Activated T-helper 2 cell treated with anti-CD3 and anti-CD28 coated beads, Interferon-gamma antibody, Interleukin-2, Interleukin-4, amounts not matched to agents 10 μg/mL and 5 μg/mL and 100 μg/mL, durations not matched to agents 14 hours and 24 hours and 36 hours (primary cell): ENCODE measurements at regions of chr7 and their contacts with region 1.

Region 1: DNA sequence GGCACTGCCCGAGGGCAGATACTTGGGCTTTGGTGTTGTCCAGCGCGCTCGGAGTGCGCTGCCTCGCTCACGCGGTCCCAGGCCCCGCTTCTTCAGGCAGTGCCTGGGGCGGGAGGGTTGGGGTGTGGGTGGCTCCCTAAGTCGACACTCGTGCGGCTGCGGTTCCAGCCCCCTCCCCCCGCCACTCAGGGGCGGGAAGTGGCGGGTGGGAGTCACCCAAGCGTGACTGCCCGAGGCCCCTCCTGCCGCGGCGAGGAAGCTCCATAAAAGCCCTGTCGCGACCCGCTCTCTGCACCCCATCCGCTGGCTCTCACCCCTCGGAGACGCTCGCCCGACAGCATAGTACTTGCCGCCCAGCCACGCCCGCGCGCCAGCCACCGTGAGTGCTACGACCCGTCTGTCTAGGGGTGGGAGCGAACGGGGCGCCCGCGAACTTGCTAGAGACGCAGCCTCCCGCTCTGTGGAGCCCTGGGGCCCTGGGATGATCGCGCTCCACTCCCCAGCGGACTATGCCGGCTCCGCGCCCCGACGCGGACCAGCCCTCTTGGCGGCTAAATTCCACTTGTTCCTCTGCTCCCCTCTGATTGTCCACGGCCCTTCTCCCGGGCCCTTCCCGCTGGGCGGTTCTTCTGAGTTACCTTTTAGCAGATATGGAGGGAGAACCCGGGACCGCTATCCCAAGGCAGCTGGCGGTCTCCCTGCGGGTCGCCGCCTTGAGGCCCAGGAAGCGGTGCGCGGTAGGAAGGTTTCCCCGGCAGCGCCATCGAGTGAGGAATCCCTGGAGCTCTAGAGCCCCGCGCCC is at the start of gene NPY:
- DNase-seq: no peak
- H3K4me3 Mint-ChIP-seq: peak within 1 kb of the TSS; percentile 52
- H3K27ac Mint-ChIP-seq: no peak within 1 kb of the TSS
- H3K4me1 Mint-ChIP-seq: peaks cover 2% of the 10 kb centered on the region
- H3K27me3 Mint-ChIP-seq: peaks cover 59% of the 10 kb centered on the region
- total RNA-seq, gene NPY: not detected in 2 replicates

Region 2: DNA sequence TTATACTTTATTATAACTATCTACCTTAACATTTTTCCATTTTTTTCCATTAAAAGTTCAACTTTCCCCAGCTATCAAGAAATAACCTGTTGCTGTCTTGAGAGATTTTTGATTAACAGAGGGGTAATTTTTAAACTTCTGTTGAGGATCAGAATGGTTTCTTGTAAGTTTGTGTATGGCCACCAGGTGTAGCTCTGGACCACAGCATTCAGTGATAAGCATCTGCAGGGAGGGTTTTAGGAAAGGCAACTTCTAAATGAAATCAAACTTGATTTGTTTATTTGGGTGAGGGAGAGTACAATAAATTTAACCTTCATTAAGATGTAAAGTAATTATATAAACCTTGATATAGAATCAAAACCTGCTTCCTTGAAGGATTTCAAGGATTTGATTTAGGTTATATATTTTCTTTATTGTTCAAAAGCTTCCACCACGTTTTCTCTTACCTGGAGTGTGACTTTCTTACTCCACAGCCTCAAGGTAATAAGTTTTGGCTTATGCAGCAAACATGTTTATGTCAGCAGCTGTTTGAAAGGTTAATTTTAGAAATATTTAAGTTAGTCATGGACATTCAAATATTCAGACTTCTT is 420.8 kb before region 1 on chr7:
- intact Hi-C with region 1: loop called (anchors 10 kb)
- DNase-seq: no peak
- H3K4me3 Mint-ChIP-seq: no peak overlapping the region
- H3K27ac Mint-ChIP-seq: no peak overlapping the region
- H3K4me1 Mint-ChIP-seq: peaks cover 12% of the 10 kb centered on the region
- H3K27me3 Mint-ChIP-seq: peaks cover 27% of the 10 kb centered on the region

Region 3: DNA sequence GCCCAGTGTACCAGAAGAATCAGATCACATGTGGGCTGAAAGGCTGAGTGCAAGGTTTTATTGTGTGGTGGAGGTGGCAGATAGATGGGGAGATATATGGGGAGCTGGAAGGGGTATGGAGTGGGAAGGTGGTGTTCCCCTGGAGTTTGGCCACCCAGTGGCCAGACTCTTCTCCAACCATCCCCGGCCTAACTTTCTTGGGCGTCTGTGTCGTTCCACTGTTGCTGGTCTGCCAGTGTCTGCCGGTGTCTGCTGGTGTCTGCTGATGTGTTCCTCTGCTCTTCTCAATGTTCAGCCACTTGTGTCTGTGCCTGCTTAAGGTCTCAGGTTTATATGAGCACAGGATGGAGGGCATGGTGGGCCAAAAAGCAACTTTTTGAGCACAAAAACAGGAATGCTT is 210.7 kb after region 1 on chr7:
- intact Hi-C with region 1: no loop called
- DNase-seq: no peak
- H3K4me3 Mint-ChIP-seq: no peak overlapping the region
- H3K27ac Mint-ChIP-seq: no peak overlapping the region
- H3K4me1 Mint-ChIP-seq: no peaks in the 10 kb centered on the region
- H3K27me3 Mint-ChIP-seq: peaks cover 36% of the 10 kb centered on the region